Uterus (tissue), 4 donors: ENCODE measurements at regions of chr2 and their contacts with region 1.

Region 1: DNA sequence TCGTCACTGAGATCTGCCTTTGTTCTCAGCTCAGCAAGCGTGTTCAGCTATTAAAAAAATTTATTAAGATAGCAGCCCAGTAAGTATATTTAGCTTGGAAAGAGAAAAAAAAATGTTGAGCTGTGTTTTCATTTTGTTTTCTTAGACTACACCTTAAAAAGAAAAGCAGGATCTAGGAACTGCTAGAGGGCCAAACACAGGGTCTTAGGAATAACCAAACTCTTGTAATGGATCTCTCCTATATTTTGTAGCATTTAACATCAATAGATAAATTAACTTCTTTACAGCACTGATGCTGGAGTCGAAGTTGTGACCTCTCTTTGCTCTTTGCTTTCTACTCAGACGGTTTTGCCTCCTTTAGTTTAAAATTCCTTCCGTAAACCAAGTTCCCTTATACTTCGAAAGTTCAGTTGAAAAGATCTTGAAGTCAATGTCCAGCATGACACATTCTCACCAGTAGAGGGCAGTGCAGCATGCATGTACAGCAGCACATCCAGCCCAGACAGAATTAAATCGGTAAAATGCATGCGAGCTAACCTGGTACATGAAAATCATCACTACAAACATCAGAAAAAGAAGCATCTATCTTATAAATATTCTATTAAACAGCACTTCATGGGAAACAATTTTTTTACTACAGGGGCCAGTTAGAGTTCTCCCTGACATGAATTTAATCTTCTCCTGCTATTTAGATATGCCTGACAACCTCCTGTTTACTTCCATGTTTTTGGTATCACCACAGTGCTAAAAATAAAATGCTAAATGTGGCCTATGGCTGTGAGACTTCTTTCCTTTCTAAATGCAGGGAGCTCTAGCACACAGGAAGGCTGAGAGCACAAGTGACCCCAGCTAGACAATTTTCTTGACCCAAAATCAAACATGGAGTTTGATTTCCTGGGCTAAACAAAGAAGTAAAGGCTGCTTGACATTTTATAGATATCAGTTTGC is 48.2 kb upstream of the MAP3K20 start:
- DNase-seq: peak; percentile 81 to 96
- H3K4me3 ChIP-seq: no peak overlapping the region
- H3K27ac ChIP-seq: peak overlapping the region; percentile 84 to 95
- H3K4me1 ChIP-seq: no peaks in the 10 kb centered on the region
- H3K27me3 ChIP-seq: no peaks in the 10 kb centered on the region
- CTCF ChIP-seq: peak; percentile 90 to 97 (median 94)
- POLR2A ChIP-seq: no peak

Region 2: DNA sequence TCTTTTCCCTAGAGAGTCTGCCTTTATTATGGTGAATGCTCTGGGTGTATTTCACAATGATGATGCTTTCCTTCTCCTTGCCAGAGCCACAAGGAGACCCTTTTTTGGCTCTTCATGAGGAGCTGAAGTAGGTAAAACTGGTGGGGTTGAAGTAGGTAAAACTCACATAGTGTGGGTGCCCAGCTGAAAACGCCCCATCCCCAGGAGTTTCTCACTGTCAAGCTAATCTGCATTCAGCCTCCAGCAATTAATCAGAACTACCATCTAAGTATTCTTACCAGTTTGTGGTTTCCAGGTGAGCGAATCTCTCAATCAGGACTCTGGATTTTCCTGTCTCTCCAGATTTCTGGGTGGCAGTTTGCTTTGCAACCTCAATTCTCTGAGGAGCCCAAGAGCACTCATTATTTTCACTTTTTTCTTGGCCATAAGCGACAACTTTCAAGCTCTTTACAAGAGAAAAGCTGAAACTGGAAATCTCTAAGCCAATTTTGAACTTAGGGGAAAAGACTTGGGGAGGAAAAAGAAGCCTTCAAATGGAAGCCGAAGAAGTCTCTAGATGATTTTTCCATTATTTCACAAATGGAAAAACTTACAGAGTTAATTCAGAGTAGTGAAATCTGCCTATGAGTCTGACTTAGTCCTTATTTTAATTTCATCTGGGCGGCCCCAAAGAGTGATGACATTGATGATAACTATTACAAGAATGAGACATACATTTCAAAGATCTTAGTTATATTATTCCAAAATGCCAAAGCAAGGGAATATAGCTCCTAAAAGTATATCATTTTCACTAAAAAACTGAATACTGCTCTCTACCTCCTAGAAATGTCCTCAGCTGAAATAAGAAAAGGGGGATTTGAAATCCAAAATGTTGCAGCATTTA is 73.2 kb before region 1 on chr2:
- intact Hi-C with region 1: no loop called
- DNase-seq: no peak
- H3K4me3 ChIP-seq: no peak overlapping the region
- H3K27ac ChIP-seq: no peak overlapping the region
- H3K4me1 ChIP-seq: no peaks in the 10 kb centered on the region
- H3K27me3 ChIP-seq: no peaks in the 10 kb centered on the region
- CTCF ChIP-seq: no peak
- POLR2A ChIP-seq: no peak

Region 3: GRCh38 chr2:173210270-173211196 is 183.1 kb after region 1 on chr2:
- intact Hi-C with region 1: loop called (anchors 5 kb)
- DNase-seq: peak; percentile 72 to 91
- H3K4me3 ChIP-seq: no peak overlapping the region
- H3K27ac ChIP-seq: peak overlapping the region; percentile 80 to 96
- H3K4me1 ChIP-seq: peaks cover 0 to 6% of the 10 kb centered on the region in 2 donors
- H3K27me3 ChIP-seq: no peaks in the 10 kb centered on the region
- CTCF ChIP-seq: peak; percentile 90 to 96 (median 94)
- POLR2A ChIP-seq: no peak